Activated CD4-positive, alpha-beta memory T cell treated with anti-CD3 and anti-CD28 coated beads for 36 hours (primary cell): ENCODE measurements at regions of chr18 and their contacts with region 1.

Region 1: GRCh38 chr18:3062798-3063680 is 50.1 kb upstream of the LPIN2 start:
- DNase-seq: peak; percentile 86
- H3K4me3 Mint-ChIP-seq: peak overlapping the region; percentile 55
- H3K27ac Mint-ChIP-seq: peak overlapping the region; percentile 73
- H3K4me1 Mint-ChIP-seq: peaks cover 68% of the 10 kb centered on the region
- H3K27me3 Mint-ChIP-seq: no peaks in the 10 kb centered on the region

Region 2: DNA sequence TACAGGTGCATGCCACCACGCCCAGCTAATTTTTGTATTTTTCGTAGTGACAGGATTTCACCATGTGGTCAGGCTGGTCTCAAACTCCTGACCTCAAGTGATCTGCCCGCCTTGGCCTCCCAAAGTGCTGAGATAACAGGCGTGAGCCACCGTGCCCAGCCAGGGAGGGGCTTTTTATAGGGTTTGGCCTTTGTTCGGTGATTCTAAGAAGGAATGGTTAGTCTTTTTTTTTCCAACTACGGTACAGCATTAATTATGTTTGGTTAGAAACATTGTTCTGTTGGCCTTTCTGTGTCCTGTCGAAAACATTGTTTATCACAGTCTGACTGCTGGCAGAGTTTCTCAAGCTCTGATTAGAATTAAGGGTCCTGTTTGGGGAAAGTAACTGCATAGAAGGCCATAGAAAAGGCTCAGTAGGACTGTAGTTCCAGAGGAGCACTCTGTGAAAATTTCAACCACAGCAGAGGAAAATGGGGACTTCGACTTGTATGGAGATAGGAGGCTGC is 426.9 kb before region 1 on chr18:
- CTCF ChIA-PET with region 1: no interaction called
- POLR2A ChIA-PET with region 1: no interaction called
- intact Hi-C with region 1: loop called (anchors 5 kb)
- DNase-seq: no peak
- H3K4me3 Mint-ChIP-seq: peak overlapping the region; percentile 59
- H3K27ac Mint-ChIP-seq: peak overlapping the region; percentile 92
- H3K4me1 Mint-ChIP-seq: peaks cover 84% of the 10 kb centered on the region
- H3K27me3 Mint-ChIP-seq: no peaks in the 10 kb centered on the region

Region 3: GRCh38 chr18:2723207-2723606 is 339.8 kb before region 1 on chr18:
- CTCF ChIA-PET with region 1: no interaction called
- POLR2A ChIA-PET with region 1: no interaction called
- intact Hi-C with region 1: no loop called
- DNase-seq: no peak
- H3K4me3 Mint-ChIP-seq: no peak overlapping the region
- H3K27ac Mint-ChIP-seq: peak overlapping the region; percentile 9
- H3K4me1 Mint-ChIP-seq: peaks cover 40% of the 10 kb centered on the region
- H3K27me3 Mint-ChIP-seq: no peaks in the 10 kb centered on the region

Region 4: GRCh38 chr18:2958819-2959298 is 104.2 kb before region 1 on chr18:
- CTCF ChIA-PET with region 1: interaction called, 12 read pairs
- POLR2A ChIA-PET with region 1: interaction called, 10 read pairs
- intact Hi-C with region 1: loop called (anchors 1 kb)
- DNase-seq: peak; percentile 64
- H3K4me3 Mint-ChIP-seq: peak overlapping the region; percentile 62
- H3K27ac Mint-ChIP-seq: peak overlapping the region; percentile 100
- H3K4me1 Mint-ChIP-seq: peaks cover 92% of the 10 kb centered on the region
- H3K27me3 Mint-ChIP-seq: no peaks in the 10 kb centered on the region

Region 5: GRCh38 chr18:3012964-3013804 is 49.9 kb before region 1 on chr18 and contains the start of gene LPIN2:
- CTCF ChIA-PET with region 1: interaction called, 37 read pairs
- POLR2A ChIA-PET with region 1: interaction called, 3 read pairs
- intact Hi-C with region 1: loop called (anchors 1 kb)
- DNase-seq: peak; percentile 98
- H3K4me3 Mint-ChIP-seq: peak within 1 kb of the TSS; percentile 98
- H3K27ac Mint-ChIP-seq: peak within 1 kb of the TSS; percentile 96
- H3K4me1 Mint-ChIP-seq: peaks cover 63% of the 10 kb centered on the region
- H3K27me3 Mint-ChIP-seq: no peaks in the 10 kb centered on the region
- total RNA-seq, gene LPIN2: 102 to 107 TPM

Region 6: GRCh38 chr18:3074087-3074486 is 11.0 kb after region 1 on chr18:
- CTCF ChIA-PET with region 1: interaction called, 72 read pairs
- POLR2A ChIA-PET with region 1: interaction called, 3 read pairs
- intact Hi-C with region 1: no loop called
- DNase-seq: no peak
- H3K4me3 Mint-ChIP-seq: no peak overlapping the region
- H3K27ac Mint-ChIP-seq: no peak overlapping the region
- H3K4me1 Mint-ChIP-seq: peaks cover 11% of the 10 kb centered on the region
- H3K27me3 Mint-ChIP-seq: no peaks in the 10 kb centered on the region

Region 7: DNA sequence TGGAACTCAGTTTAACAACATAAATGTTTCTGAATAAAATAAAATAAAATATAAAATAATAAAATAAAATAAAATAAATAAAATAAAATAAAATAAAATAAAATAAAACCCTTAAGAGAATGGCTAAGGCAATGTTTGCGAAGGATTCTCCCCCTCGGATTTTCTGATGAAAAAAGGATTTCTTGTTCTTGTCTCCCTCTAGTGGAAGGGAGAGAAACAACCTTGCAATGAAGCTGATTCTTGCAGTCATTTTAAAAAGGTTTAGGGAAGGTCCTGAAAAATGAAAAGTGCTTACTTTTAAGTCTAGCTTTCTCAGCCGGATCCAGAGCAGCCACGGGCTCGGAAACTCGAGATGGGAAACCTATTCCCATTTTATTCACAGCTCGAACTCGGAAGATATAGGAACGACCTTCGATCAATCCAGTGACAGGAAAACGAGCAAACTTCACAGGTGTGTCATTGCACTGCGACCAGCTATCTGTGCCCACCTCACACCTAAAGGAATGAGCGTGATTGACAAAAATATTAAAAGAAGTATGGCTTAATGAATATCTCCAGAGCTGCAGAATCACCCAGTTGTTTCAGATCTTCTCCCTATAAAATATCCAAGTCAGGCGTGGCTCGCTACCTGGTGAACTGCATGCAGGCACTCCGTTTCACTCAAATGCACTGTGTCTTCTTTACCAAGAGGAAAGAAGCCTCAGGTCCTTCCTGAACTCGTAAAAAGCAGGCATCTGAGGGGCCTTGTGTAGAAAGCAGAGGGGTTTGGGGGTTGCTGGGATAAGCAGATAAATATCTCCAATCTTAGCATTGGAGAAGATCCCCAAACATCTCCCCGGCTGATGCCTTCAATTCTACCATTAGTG is 88.6 kb after region 1 on chr18:
- CTCF ChIA-PET with region 1: interaction called, 18 read pairs
- POLR2A ChIA-PET with region 1: no interaction called
- intact Hi-C with region 1: loop called (anchors 2 kb)
- DNase-seq: no peak
- H3K4me3 Mint-ChIP-seq: no peak overlapping the region
- H3K27ac Mint-ChIP-seq: no peak overlapping the region
- H3K4me1 Mint-ChIP-seq: peaks cover 6% of the 10 kb centered on the region
- H3K27me3 Mint-ChIP-seq: no peaks in the 10 kb centered on the region

Region 8: DNA sequence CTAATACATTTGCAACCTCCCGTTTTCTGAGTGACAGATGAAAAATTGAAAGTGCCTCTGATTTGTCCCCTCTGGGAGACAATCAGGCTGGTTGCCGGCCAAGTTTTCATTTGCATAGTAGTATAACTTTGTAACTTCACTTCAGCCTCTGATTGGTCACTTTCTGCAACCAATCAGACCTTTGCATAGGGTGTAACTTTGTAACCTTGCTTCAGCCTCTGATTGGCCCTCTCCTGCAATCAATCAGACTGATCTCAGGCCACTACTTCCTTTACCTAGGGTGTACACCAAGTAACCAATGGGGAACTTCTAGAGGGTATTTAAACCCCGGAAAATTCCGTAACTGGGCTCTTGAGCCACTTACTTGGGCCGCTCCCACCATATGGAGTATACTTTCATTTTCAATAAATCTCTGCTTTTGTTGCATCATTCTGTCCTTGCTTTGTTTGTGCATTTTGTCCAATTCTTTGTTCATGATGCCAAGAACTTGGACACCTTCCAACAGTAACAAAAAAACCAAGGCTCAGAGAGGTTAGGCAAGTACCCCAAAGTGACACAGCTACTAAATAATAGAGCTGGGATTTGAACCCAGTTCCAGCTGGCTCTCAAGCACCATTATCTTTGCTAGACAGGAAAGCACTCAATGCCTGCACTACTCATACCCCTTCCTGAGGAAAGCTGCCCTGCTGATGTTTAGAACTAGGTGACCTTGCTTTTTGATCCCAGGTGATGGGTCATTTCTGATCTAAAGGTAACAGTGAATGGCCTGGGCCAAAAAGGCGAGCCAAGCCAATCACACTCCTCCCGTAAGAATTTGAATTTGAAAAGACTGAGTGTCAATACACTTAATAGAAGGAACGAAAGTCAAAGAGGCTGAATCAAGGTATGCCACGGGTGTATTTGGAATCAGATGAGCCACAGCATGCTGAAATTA is 167.6 kb after region 1 on chr18:
- CTCF ChIA-PET with region 1: no interaction called
- POLR2A ChIA-PET with region 1: no interaction called
- intact Hi-C with region 1: no loop called
- DNase-seq: no peak
- H3K4me3 Mint-ChIP-seq: no peak overlapping the region
- H3K27ac Mint-ChIP-seq: no peak overlapping the region
- H3K4me1 Mint-ChIP-seq: peaks cover 6% of the 10 kb centered on the region
- H3K27me3 Mint-ChIP-seq: no peaks in the 10 kb centered on the region

Region 9: GRCh38 chr18:3360211-3360610 is 297.2 kb after region 1 on chr18:
- CTCF ChIA-PET with region 1: no interaction called
- POLR2A ChIA-PET with region 1: no interaction called
- intact Hi-C with region 1: no loop called
- DNase-seq: no peak
- H3K4me3 Mint-ChIP-seq: no peak overlapping the region
- H3K27ac Mint-ChIP-seq: no peak overlapping the region
- H3K4me1 Mint-ChIP-seq: peaks cover 14% of the 10 kb centered on the region
- H3K27me3 Mint-ChIP-seq: peaks cover 4% of the 10 kb centered on the region